ENCODE measurements at regions of chr16 and their contacts with region 1.

Region 1: DNA sequence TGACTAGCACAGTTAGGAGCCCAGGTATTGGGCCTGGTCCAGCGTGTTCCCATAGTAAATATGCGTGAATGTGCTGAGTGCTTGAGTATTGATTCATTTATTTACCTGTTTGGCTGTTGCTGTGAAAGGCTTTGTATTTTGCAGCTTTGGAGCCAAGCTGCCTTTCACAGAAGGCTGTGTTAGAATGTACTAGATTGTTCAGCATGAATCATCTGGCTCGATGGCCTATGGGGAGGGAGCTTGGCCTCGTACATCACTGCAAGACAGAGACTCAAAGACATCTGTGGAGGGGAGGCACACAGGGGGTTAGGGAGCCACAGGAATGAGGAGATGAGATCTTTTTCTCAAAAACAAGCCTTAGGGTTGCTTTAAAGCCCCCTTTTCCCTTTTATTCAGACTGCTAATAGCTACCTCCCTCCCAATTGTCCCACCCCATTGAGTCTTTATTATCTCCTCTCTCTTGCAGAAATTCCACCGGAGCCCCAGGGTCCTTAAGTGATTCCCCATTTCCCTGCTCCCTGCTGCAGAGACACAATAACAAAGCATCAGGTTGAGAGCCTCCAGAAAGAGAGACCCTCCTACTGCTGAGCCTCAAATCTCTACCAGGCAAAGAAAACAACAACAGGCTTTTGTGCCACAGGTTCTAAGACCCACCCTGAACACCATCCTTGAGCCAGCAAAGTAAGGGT is 307.2 kb downstream of the ABCC12 start:
- DNase-seq: peak; percentile 71
- H3K4me3 ChIP-seq: no peak overlapping the region
- H3K27ac ChIP-seq: peak overlapping the region; percentile 83
- H3K4me1 ChIP-seq: peaks cover 25% of the 10 kb centered on the region
- H3K27me3 ChIP-seq: no peaks in the 10 kb centered on the region
- CTCF ChIP-seq: no peak

Region 2: GRCh38 chr16:47644166-47644565 is 204.4 kb before region 1 on chr16:
- CTCF ChIA-PET with region 1: no interaction called
- dilution Hi-C with region 1: no loop called
- in situ Hi-C with region 1: no loop called
- intact Hi-C with region 1: no loop called
- DNase-seq: peak; percentile 60
- H3K4me3 ChIP-seq: no peak overlapping the region
- H3K27ac ChIP-seq: no peak overlapping the region
- H3K4me1 ChIP-seq: peaks cover 7% of the 10 kb centered on the region
- H3K27me3 ChIP-seq: no peaks in the 10 kb centered on the region
- CTCF ChIP-seq: no peak

Region 3: DNA sequence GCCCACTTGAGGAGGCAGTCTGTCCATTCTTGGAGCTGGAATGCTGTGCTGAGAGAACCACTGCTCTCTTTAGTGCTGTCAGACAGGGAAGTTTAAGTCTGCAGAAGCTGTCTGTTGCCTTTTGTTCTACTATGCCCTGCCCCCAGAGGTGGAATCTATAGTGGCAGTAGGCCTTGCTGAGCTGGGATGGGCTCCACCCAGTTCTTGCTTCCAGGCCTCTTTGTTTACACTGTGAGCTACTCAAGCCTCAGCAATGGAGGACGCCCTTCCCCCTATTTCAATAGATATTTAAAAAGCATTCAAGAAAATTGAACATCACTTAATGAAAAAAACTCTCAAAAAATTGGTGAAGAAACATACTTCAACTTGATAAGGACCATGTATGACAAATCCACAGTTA is 73.9 kb before region 1 on chr16:
- CTCF ChIA-PET with region 1: no interaction called
- dilution Hi-C with region 1: loop called (anchors 5 kb)
- in situ Hi-C with region 1: no loop called
- intact Hi-C with region 1: no loop called
- DNase-seq: peak; percentile 44
- H3K4me3 ChIP-seq: no peak overlapping the region
- H3K27ac ChIP-seq: no peak overlapping the region
- H3K4me1 ChIP-seq: peaks cover 10% of the 10 kb centered on the region
- H3K27me3 ChIP-seq: no peaks in the 10 kb centered on the region
- CTCF ChIP-seq: peak in 1 of 2 donors; percentile 42

Region 4: DNA sequence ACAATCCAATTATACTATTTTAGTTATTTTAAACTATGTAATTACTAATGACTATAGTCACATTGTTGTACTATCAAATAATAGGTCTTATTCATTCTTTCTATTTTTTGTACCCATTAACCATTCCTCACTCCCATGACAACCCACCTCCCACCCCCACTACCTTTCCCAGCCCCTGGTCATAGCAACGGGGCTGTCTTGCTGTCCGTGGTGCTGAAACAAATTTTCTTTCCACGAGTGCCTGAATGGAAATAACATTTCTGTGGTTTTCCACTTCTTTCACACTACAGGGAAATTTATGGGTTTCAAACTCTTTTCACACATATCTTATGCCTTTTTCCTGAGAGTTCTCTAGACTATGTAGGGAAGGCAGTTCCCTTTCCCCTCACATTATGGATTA is 60.9 kb before region 1 on chr16:
- CTCF ChIA-PET with region 1: no interaction called
- dilution Hi-C with region 1: no loop called
- in situ Hi-C with region 1: no loop called
- intact Hi-C with region 1: no loop called
- DNase-seq: no peak
- H3K4me3 ChIP-seq: no peak overlapping the region
- H3K27ac ChIP-seq: no peak overlapping the region
- H3K4me1 ChIP-seq: no peaks in the 10 kb centered on the region
- H3K27me3 ChIP-seq: no peaks in the 10 kb centered on the region
- CTCF ChIP-seq: no peak

Region 5: DNA sequence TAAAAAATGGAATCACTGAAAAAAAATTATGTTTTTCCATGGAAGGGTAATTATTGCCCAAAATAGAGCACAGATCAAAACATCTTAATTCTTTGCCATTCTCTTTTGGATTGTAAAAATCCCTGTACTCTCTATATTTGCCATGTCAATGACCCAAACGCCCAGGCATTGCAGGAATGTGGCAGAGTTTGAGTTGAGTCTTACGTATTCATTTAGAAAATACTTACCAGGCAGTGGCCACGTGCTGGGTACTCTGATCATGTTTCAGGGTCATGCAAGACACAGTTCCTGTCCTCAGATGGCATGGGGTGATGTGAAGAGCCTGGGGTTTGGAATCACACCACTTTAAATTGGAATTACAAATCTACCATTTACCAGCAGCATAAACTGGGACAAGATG is 39.6 kb after region 1 on chr16:
- CTCF ChIA-PET with region 1: no interaction called
- dilution Hi-C with region 1: no loop called
- in situ Hi-C with region 1: no loop called
- intact Hi-C with region 1: loop called (anchors 5 kb)
- DNase-seq: peak; percentile 40
- H3K4me3 ChIP-seq: no peak overlapping the region
- H3K27ac ChIP-seq: peak overlapping the region; percentile 66
- H3K4me1 ChIP-seq: peaks cover 35% of the 10 kb centered on the region
- H3K27me3 ChIP-seq: no peaks in the 10 kb centered on the region
- CTCF ChIP-seq: no peak

Region 6: DNA sequence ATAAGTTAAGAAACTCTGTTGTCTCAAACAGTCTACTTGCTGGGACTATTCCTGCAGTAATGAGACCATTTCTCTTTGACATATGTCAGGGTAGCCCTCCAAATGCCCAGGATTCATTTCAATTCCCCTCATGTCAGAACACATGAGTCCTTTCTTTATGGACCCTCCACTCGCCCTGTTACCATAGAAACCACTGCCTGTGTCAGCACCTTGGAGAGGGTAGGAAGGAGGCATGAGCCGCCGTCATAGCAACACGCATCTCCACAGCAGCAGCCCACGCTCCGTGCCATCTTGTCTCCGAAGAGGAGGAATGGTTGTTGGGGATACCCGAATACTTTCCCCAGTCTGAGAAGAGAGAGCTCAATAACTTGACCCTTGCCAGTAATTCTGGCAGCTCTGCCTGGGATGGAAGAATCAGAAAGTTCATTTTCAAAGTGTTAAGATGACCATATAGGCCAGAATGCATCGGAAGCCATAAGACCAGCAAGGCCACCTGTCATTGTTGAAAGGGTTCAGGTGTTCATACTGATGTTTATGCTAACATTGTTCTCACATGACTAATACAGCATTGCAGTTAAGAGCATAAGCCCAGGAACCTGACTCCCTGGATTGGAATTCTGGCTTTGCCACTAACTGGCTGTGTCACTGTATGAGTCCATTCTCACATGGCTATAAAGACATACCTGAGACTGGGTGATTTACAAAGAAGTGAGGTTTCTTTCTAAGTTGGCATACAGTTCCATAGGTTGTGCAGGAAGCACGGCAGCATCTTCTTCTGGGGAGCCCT is 166.0 kb after region 1 on chr16:
- CTCF ChIA-PET with region 1: no interaction called
- dilution Hi-C with region 1: no loop called
- in situ Hi-C with region 1: no loop called
- intact Hi-C with region 1: loop called (anchors 5 kb)
- DNase-seq: peak; percentile 98
- H3K4me3 ChIP-seq: no peak overlapping the region
- H3K27ac ChIP-seq: peak overlapping the region; percentile 80
- H3K4me1 ChIP-seq: peaks cover 20% of the 10 kb centered on the region
- H3K27me3 ChIP-seq: no peaks in the 10 kb centered on the region
- CTCF ChIP-seq: no peak

Region 7: GRCh38 chr16:48143812-48144368 is 295.3 kb after region 1 on chr16:
- CTCF ChIA-PET with region 1: no interaction called
- dilution Hi-C with region 1: no loop called
- in situ Hi-C with region 1: no loop called
- intact Hi-C with region 1: no loop called
- DNase-seq: no peak
- H3K4me3 ChIP-seq: no peak overlapping the region
- H3K27ac ChIP-seq: no peak overlapping the region
- H3K4me1 ChIP-seq: no peaks in the 10 kb centered on the region
- H3K27me3 ChIP-seq: no peaks in the 10 kb centered on the region
- CTCF ChIP-seq: no peak

Measured in mammary epithelial cell (primary cell).